ENCODE measurements at regions of chr11 and their contacts with region 1.

Region 1: DNA sequence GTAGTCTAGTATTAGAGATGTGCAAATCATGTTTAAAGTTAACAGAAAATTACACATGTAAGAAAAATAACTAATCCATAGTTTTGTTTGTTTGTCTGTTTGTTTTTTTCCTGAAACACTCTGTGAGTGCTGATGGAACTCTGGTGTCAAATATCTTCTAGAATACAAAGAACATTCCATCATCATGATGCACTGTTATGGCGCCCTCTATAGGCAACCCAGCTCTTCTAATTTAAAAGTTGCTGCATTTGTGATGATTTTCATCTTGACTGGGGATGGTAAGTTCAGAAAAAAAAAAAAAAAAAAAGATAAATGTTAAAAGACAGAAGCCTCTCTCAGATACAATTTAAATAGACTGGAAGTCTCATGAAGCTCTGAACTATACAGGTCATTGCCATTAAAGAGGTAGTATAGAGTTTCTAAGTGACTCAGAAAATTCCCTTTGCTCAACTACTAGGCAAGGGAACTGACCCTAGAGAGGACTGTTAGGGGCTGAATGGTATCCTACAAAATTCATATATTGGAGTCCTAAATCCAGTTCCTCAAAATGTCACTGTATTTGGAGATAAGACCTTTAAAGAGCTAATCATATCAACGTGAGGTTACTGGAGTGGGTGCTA is 597.2 kb upstream of the ANO3 start:
- DNase-seq: peak; percentile 58
- ATAC-seq: peak; percentile 69
- H3K4me3 ChIP-seq: no peak overlapping the region
- H3K27ac ChIP-seq: no peak overlapping the region
- H3K4me1 ChIP-seq: peaks cover 4% of the 10 kb centered on the region; the same call in 1 of the 2 replicates
- H3K27me3 ChIP-seq: no peaks in the 10 kb centered on the region
- CTCF ChIP-seq: peak; percentile 61

Region 2: DNA sequence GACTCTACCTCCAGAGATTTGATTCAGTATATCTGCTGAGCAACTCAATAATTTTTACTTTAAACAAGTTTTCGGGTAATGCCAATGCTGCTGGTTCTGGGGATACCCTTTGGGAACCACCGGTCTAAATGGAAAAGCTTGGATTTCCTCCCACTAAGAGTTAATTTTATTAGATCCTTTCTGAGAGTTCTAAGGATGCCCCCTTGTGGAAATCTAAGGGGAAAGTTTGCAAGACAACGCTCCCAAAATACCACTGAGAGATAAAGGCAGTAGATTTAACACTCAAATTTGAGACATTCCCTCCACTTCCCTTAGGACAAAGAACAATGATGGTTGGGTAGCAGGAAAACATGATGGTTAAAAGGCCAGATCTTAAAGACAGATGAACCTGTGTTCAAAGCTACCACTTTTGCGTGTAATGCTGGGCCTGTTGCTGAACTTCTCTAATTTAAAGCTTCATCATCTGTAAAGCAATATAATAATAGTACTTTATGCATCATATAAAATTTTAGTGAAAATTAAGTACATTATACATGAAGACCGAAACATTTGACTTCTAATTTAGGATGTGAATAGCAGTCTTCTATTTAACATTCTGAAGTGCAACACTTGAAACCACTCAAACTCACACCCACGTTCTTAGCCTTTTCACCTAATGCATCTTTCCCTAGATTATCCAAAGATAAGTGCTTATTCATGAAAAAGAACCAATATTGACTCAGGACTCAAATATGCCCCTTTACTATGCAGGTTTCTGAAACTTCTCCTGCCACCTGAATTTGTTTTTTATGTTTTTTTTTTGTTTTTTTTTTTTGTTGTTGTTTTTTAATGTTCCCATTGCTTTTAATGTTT is 1347.9 kb before region 1 on chr11:
- CTCF ChIA-PET with region 1: no interaction called
- POLR2A ChIA-PET with region 1: no interaction called
- intact Hi-C with region 1: loop called (anchors 5 kb)
- DNase-seq: peak; percentile 60
- ATAC-seq: peak; percentile 49
- H3K4me3 ChIP-seq: no peak overlapping the region
- H3K27ac ChIP-seq: no peak overlapping the region
- H3K4me1 ChIP-seq: peaks cover 11% of the 10 kb centered on the region
- H3K27me3 ChIP-seq: no peaks in the 10 kb centered on the region
- CTCF ChIP-seq: peak; percentile 71

Region 3: DNA sequence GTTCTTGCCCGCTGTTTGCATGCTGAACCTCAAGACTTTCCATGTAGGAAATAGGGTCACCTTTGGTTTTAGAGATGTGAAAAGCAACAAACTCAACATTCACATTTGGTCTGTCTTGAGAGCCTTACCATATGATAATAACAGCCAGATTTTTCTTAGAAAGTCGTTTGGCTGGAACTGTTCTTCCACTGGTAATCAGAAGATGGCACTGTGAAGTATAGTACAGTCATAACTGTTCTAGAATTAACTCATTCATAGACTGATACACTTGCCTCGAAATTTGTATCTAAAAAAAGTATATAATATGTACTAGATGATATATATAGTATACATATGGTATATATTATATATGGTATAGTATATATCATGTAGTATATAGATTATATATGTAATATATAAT is 1225.6 kb before region 1 on chr11:
- CTCF ChIA-PET with region 1: interaction called, 3 read pairs
- POLR2A ChIA-PET with region 1: no interaction called
- intact Hi-C with region 1: loop called (anchors 2 kb)
- DNase-seq: peak; percentile 44
- ATAC-seq: peak; percentile 32; the same call in 1 of the 2 replicates
- H3K4me3 ChIP-seq: no peak overlapping the region
- H3K27ac ChIP-seq: no peak overlapping the region
- H3K4me1 ChIP-seq: peaks cover 30% of the 10 kb centered on the region
- H3K27me3 ChIP-seq: no peaks in the 10 kb centered on the region
- CTCF ChIP-seq: peak; percentile 55; the same call in 1 of the 2 replicates

Region 4: DNA sequence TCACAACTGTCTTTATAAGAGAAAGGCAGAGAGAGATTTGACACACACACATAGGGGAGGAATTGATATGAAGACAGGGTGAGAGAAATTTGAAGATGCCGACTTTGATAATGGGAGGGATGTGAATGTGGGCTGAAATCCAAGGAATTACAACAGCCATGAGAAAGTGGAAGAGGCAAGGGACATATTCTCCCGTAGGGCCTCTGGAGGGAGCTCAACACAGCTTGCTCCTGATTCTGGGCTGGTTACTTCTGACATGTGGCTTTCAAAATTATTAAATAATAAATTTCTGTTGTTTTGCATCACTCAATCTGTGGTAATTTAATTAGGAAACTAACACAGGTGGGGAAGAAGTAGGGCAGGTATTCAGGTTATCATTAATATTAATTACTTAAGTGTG is 954.9 kb before region 1 on chr11:
- CTCF ChIA-PET with region 1: interaction called, 5 read pairs
- POLR2A ChIA-PET with region 1: no interaction called
- intact Hi-C with region 1: loop called (anchors 2 kb)
- DNase-seq: peak; percentile 54
- ATAC-seq: peak; percentile 58; the same call in 1 of the 2 replicates
- H3K4me3 ChIP-seq: no peak overlapping the region
- H3K27ac ChIP-seq: no peak overlapping the region
- H3K4me1 ChIP-seq: no peaks in the 10 kb centered on the region
- H3K27me3 ChIP-seq: no peaks in the 10 kb centered on the region
- CTCF ChIP-seq: peak; percentile 58

Region 5: GRCh38 chr11:25562417-25562816 is 172.3 kb before region 1 on chr11:
- CTCF ChIA-PET with region 1: no interaction called
- POLR2A ChIA-PET with region 1: no interaction called
- intact Hi-C with region 1: no loop called
- DNase-seq: no peak
- ATAC-seq: no peak
- H3K4me3 ChIP-seq: no peak overlapping the region
- H3K27ac ChIP-seq: no peak overlapping the region
- H3K4me1 ChIP-seq: no peaks in the 10 kb centered on the region
- H3K27me3 ChIP-seq: no peaks in the 10 kb centered on the region
- CTCF ChIP-seq: no peak

Region 6: DNA sequence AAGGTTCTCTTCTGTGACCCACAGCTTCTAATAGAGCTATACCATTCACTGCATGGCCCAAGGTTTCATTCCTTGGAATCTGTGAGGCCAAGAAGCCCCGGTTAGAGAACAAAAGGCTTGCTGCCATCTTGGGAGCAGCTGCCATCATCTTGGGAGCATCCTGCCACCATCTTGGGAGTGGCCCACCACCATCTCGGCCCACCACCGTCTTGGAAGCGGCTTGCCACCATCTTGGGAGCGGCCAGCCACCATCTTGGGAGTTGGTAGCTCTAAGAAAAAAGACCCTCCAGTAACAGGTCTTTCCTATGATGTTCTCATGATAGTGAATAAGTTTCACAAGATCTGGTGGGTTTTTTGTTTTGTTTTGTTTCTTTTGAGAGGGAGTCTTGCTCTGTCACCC is 106.7 kb before region 1 on chr11:
- CTCF ChIA-PET with region 1: interaction called, 11 read pairs
- POLR2A ChIA-PET with region 1: no interaction called
- intact Hi-C with region 1: no loop called
- DNase-seq: no peak
- ATAC-seq: no peak
- H3K4me3 ChIP-seq: no peak overlapping the region
- H3K27ac ChIP-seq: no peak overlapping the region
- H3K4me1 ChIP-seq: no peaks in the 10 kb centered on the region
- H3K27me3 ChIP-seq: no peaks in the 10 kb centered on the region
- CTCF ChIP-seq: no peak

Region 7: DNA sequence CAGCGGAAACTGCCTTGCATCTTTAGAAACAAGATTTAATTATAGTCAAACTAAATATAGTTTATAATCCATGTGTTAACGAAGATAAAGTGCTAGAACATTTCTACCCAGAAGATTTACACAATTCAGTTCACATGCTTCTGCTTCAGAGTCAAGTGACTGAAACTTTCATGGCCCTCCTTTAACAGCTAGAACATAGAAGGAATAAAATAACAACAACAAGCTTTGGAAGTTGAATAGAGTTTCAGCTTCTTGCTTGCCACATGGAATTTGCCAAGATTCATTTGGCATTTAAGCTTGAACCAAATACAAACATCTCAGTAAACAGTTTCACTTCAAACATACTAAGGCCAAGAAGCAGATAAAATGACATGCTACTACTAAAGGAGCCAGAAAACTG is 79.1 kb before region 1 on chr11:
- CTCF ChIA-PET with region 1: no interaction called
- POLR2A ChIA-PET with region 1: no interaction called
- intact Hi-C with region 1: no loop called
- DNase-seq: no peak
- ATAC-seq: no peak
- H3K4me3 ChIP-seq: no peak overlapping the region
- H3K27ac ChIP-seq: no peak overlapping the region
- H3K4me1 ChIP-seq: no peaks in the 10 kb centered on the region
- H3K27me3 ChIP-seq: no peaks in the 10 kb centered on the region
- CTCF ChIP-seq: no peak

Region 8: GRCh38 chr11:25961539-25961938 is 226.8 kb after region 1 on chr11:
- CTCF ChIA-PET with region 1: no interaction called
- POLR2A ChIA-PET with region 1: no interaction called
- intact Hi-C with region 1: loop called (anchors 10 kb)
- DNase-seq: peak; percentile 4
- ATAC-seq: 0 out of 2 replicates have a peak, but pooled peaks have one; percentile 50
- H3K4me3 ChIP-seq: no peak overlapping the region
- H3K27ac ChIP-seq: no peak overlapping the region
- H3K4me1 ChIP-seq: no peaks in the 10 kb centered on the region
- H3K27me3 ChIP-seq: no peaks in the 10 kb centered on the region
- CTCF ChIP-seq: peak; percentile 29; the same call in 1 of the 2 replicates

Measured in PC-3 (cell line).